ENCODE measurements at regions of chr19 and their contacts with region 1.

Region 1: DNA sequence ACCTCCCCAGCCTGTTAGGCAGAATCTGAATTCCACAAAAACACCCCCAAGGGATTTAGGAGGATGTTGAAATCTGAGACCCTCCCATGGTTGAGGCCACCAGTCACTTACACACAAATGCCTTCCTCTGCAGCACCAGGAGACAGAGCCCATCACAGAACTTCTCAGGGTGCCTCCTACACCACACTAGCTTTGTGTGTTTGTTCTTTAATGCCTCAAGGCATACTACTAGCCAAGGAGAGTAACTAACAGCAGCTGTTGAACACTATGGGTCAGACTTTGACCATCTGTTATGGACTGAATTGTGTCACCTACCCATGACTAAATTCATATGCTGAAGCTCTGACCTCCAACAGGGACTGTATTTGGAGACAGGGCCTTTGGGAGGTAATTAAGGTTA is 9.5 kb upstream of the MED26 start:
- DNase-seq: no peak
- ATAC-seq: no peak
- H3K4me3 ChIP-seq: no peak overlapping the region
- H3K27ac ChIP-seq: no peak overlapping the region
- H3K4me1 ChIP-seq: no peaks in the 10 kb centered on the region
- H3K27me3 ChIP-seq: no peaks in the 10 kb centered on the region
- CTCF ChIP-seq: no peak

Region 2: DNA sequence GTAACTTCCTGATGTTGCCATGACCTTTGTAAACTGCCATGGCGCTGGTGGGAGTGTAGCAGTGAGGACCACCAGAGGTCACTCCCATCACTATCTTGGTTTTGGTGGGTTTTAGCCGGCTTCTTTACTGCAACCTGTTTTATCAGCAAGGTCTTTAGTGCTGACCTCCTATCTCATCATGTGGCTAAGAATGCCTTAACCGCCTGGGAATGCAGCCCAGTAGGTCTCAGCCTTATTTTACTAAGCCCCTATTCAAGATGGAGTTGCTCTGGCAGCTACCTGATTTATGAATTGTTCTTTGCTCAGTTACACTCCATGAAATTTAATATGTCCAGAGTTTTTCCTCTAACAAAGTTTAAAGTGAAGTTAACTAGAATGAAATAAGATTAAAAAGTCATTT is 161.1 kb before region 1 on chr19:
- CTCF ChIA-PET with region 1: no interaction called
- POLR2A ChIA-PET with region 1: interaction called, 19 read pairs
- in situ Hi-C with region 1: no loop called
- intact Hi-C with region 1: no loop called
- DNase-seq: no peak
- ATAC-seq: no peak
- H3K4me3 ChIP-seq: no peak overlapping the region
- H3K27ac ChIP-seq: no peak overlapping the region
- H3K4me1 ChIP-seq: no peaks in the 10 kb centered on the region
- H3K27me3 ChIP-seq: no peaks in the 10 kb centered on the region
- CTCF ChIP-seq: no peak

Region 3: GRCh38 chr19:16886231-16886880 is 248.8 kb after region 1 on chr19:
- CTCF ChIA-PET with region 1: no interaction called
- POLR2A ChIA-PET with region 1: no interaction called
- in situ Hi-C with region 1: no loop called
- intact Hi-C with region 1: no loop called
- DNase-seq: no peak
- ATAC-seq: no peak
- H3K4me3 ChIP-seq: no peak overlapping the region
- H3K27ac ChIP-seq: no peak overlapping the region
- H3K4me1 ChIP-seq: no peaks in the 10 kb centered on the region
- H3K27me3 ChIP-seq: no peaks in the 10 kb centered on the region
- CTCF ChIP-seq: no peak

Measured in Panc1 (cell line).